Head of caudate nucleus (tissue), 42 donors: ENCODE measurements at regions of chr14 and their contacts with region 1.

Region 1: DNA sequence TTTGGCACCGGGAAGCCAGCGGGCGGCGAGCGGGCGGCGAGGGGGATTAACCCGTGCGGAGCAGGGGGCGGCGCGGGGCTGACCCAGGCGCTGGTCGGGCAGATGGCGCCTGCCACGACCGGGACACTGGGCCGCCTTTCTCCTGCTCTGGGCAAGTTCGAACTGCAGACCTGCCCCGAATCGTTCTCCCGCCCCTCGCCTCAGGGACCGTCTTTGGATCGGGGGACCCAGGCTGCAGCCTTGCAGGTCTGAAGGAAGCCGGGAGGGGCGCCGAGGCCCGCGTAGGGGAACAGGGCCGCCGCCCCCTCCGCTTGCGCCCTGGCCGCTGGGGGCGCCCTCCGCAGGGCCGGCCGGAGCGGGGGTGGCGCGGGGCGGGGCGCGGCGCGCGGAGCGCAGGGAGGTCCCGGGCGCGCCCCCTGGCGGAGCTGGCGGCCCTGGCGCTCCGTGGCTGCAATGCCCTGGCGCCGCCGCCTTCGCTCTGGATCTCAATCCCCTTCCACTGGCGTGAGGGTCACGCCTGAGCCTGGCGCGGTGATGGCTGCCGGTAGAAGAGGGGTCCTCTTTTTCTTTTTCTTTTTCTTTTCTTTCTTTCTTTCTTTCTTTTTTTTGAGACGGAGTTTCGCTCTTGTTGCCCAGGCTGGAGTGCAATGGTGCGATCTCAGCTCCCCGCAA is 449 bp upstream of the LTBP2 start:
- DNase-seq: peak; percentile 22 to 86 (median 70)

Region 2: DNA sequence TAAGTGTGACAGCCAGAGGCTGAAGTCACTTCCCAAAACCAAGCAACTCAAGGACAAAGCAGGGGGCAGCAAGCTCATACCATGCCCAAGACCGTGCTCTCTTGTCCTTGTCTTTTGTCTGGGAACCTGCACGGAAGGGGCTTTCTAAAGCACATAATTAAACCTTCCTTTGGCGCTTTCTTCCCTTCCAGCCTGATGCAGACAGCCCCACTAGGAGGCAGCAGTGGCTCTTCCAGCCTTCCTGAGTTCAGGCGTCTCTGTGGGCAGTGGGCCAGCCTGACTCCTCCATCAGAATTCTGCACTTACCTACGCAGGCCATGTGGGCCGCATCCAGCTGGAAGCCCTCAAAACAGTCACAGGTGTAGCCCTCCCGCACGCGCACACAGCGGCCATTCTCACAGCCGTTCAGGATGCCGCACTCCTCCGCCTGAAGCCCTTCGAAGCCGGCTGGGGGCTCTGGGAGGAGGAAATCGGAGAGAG is 111.3 kb before region 1 on chr14:
- intact Hi-C with region 1: loop called (anchors 5 kb)
- DNase-seq: peak in 39 of 42 donors; percentile 27 to 80 (median 62)